ENCODE measurements at regions of chr19 and their contacts with region 1.

Region 1: DNA sequence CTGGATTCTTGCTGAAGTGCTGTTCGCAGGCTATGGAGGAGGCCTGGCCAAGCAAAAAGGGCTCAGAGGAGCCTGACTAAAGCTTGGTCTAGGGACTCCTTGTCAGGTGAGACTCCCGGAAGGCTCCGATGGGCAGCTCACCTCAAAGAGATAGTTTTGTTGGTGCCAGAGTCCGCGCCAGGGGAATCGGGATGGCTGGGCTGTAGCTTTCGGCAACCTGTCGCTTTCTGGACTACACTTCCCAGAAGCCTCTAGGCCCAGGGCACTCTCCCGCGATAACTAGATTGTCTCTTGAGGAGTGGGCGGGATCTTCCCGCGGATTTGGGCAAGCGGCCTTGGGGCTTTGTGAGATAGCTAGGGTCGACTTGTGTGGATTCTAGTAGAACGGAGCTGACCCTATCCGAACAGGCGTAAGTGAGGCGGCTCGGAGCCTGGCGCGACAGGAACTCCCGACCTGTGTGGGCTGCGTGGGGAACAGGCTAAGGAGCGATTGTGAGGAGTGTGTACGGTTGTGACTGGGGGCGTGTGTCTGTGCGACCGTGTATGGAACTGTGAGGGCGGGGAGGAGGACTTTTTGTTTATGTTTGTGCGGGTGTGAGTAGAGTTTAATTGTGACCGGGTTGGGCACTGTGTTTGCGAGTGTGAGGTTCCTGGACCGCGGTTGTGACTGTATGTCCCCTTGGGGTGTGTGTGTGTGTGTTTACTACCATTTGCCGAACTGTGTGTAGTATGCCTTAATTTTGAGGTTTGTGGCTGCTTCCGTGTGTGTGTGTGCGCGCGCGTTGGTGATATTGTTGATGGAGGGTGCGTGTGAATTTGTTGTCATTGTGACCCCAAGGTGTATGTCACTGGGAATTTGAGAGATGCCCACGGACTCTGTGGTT is at the start of gene ZNF345:
- DNase-seq: peak; percentile 84
- H3K4me3 Mint-ChIP-seq: no peak within 1 kb of the TSS
- H3K27ac Mint-ChIP-seq: no peak within 1 kb of the TSS
- H3K4me1 Mint-ChIP-seq: peaks cover 4% of the 10 kb centered on the region
- H3K27me3 Mint-ChIP-seq: no peaks in the 10 kb centered on the region
- total RNA-seq, gene ZNF345: 2.3 and 3.9 TPM in 2 replicates

Region 2: DNA sequence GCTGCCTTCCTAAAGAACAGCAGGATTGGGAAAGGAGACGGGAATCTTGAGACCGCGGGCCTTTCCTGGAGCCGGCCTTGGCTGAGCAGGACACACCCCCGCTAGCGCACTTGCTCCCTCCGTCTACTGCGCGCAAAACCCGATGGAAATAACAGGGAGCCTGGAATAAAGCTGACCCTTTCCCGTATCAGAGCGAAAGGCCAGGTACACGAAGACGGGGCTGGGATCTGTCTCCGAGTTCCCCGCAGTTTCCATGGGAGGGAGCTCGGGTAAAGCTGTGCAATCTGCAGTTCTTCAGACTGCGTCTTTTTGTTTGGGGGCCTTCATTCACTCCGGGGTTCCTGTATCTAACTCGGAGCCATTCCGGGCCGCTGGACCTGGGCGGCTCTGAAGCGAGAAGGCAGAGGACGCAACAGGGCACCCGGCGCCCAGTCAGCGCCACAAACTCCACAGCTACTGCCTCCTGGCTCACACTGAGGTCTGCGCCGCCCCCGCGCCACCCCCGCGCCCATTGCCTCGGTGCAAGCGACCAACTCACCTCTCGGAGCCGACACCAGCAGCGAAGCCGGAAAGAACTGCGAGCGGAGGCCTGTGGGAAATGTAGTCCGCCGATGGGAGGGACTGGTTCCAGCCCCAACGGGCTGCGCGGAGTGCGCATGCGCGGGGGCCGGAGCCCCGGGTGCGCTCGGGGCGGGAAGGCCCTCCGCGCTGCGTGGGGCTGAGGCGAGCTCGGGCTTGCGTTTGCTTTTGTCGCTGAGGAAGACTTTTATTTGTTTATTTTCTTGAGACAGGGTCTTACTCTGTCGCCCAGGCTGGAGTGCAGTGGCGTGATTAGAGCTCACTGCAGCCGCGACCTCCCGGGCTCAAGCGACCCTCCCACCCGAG is 471.9 kb before region 1 on chr19 and contains the start of gene ZFP14:
- intact Hi-C with region 1: loop called (anchors 1 kb)
- DNase-seq: peak; percentile 91
- H3K4me3 Mint-ChIP-seq: peak within 1 kb of the TSS; percentile 85
- H3K27ac Mint-ChIP-seq: peak within 1 kb of the TSS; percentile 86
- H3K4me1 Mint-ChIP-seq: peaks cover 12% of the 10 kb centered on the region
- H3K27me3 Mint-ChIP-seq: no peaks in the 10 kb centered on the region
- total RNA-seq, gene ZFP14: 2.0 and 2.4 TPM in 2 replicates

Region 3: DNA sequence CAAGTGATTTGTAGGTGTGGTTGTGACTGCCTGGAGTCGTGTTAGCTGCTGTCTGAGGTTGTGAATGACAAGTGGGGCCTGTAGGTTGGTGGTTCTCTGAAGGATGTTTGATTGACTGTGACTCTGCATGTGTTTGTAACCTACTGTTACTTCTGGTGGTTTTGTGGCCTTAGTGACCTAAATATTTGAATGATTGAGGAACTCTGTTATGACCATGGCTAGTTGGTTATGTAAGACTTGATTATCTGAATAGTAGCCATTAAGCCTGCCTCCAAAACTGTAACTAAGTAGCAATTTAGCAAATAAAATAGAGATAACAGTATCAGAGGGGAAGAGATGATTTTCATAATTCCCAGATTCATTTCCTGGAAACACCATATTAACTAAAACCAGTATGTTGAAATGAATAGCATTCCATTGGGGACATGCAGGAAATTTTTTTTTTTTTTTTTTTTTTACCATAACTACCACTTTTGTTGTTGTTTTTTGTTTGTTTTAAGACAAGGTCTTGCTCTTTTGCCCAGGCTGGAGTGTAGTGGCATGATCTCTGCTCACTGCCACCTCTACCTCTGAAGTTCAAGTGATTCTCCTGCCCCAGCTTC is 244.8 kb before region 1 on chr19:
- intact Hi-C with region 1: no loop called
- DNase-seq: no peak
- H3K4me3 Mint-ChIP-seq: peak overlapping the region; percentile 87
- H3K27ac Mint-ChIP-seq: peak overlapping the region; percentile 88
- H3K4me1 Mint-ChIP-seq: peaks cover 17% of the 10 kb centered on the region
- H3K27me3 Mint-ChIP-seq: no peaks in the 10 kb centered on the region

Region 4: GRCh38 chr19:36687214-36688056 is 163.4 kb before region 1 on chr19 and contains the start of gene ZNF567:
- intact Hi-C with region 1: loop called (anchors 1 kb)
- DNase-seq: peak; percentile 96
- H3K4me3 Mint-ChIP-seq: peak within 1 kb of the TSS; percentile 95
- H3K27ac Mint-ChIP-seq: peak within 1 kb of the TSS; percentile 83
- H3K4me1 Mint-ChIP-seq: peaks cover 17% of the 10 kb centered on the region
- H3K27me3 Mint-ChIP-seq: no peaks in the 10 kb centered on the region
- total RNA-seq, gene ZNF567: 7.6 and 7.7 TPM in 2 replicates

Region 5: DNA sequence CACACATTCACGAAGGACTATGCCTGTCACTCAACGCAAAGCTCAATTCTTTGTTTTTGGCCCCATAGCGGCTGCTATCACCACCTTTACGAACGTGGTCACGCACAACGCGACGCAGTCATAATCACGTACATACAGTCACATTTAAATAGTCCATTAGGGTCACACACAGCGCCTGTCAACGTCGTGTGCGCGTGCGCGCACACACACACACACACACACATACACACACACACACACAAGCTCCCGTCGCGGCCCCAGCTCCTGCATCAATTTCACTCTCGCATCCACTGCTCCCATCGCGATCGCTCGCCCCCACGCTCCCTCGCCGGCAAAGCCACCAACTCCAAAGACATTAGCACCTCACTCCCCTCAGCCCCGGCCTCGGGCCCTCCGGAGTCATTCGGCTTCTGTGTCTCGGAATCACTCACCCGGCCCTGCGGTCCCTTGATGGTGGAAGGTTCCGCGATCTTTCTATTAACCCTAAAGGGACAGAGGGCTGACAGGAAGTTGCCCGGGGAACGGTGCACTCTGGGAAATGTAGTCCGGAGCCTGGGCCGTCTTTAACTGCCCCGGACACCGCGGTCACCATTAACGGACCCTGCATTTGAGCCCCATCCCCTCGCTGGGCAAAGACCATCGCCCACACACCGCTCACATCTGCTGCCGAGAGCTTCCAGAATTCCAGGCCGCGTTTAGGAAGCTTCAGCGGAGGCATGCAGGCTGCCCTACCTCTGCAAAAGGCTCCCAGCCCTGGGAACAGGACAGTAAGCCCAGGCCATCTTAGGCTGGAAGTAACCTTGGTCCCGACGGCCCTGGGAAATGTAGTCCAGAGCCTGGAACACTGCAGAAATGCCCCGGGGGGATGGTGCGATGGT is 12.7 kb before region 1 on chr19 and contains the start of gene ZNF790:
- intact Hi-C with region 1: loop called (anchors 1 kb)
- DNase-seq: peak; percentile 77
- H3K4me3 Mint-ChIP-seq: no peak within 1 kb of the TSS
- H3K27ac Mint-ChIP-seq: no peak within 1 kb of the TSS
- H3K4me1 Mint-ChIP-seq: peaks cover 2% of the 10 kb centered on the region
- H3K27me3 Mint-ChIP-seq: no peaks in the 10 kb centered on the region
- total RNA-seq, gene ZNF790: 4.6 TPM in 2 replicates

Region 6: DNA sequence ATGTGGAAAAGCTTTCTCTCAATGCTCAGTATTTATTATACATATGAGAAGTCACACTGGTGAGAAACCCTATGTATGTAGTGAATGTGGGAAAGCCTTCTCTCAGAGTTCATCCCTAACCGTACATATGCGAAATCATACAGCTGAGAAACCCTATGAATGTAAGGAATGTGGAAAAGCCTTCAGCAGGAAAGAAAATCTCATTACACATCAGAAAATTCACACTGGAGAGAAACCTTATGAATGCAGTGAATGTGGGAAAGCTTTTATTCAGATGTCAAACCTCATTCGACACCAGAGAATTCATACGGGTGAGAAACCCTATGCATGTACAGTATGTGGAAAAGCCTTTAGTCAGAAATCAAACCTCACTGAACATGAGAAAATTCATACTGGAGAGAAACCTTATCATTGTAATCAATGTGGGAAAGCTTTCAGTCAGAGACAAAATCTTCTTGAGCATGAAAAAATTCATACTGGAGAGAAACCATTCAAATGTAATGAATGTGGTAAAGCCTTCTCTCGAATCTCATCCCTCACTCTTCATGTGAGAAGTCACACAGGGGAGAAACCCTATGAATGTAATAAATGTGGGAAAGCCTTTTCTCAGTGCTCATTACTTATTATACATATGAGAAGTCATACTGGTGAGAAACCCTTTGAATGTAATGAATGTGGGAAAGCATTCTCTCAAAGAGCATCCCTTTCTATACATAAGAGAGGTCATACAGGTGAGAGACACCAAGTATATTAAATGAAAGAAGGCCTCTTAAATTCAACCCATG is 99.7 kb after region 1 on chr19:
- intact Hi-C with region 1: no loop called
- DNase-seq: no peak
- H3K4me3 Mint-ChIP-seq: no peak overlapping the region
- H3K27ac Mint-ChIP-seq: no peak overlapping the region
- H3K4me1 Mint-ChIP-seq: no peaks in the 10 kb centered on the region
- H3K27me3 Mint-ChIP-seq: no peaks in the 10 kb centered on the region

Region 7: GRCh38 chr19:37077934-37078725 is 227.3 kb after region 1 on chr19 and contains the start of gene ZNF420:
- intact Hi-C with region 1: loop called (anchors 1 kb)
- DNase-seq: peak; percentile 85
- H3K4me3 Mint-ChIP-seq: peak within 1 kb of the TSS; percentile 97
- H3K27ac Mint-ChIP-seq: peak within 1 kb of the TSS; percentile 82
- H3K4me1 Mint-ChIP-seq: peaks cover 13% of the 10 kb centered on the region
- H3K27me3 Mint-ChIP-seq: no peaks in the 10 kb centered on the region
- total RNA-seq, gene ZNF420: 4.7 and 5.5 TPM in 2 replicates

Region 8: GRCh38 chr19:37197768-37198167 is 347.0 kb after region 1 on chr19:
- intact Hi-C with region 1: no loop called
- DNase-seq: no peak
- H3K4me3 Mint-ChIP-seq: no peak overlapping the region
- H3K27ac Mint-ChIP-seq: no peak overlapping the region
- H3K4me1 Mint-ChIP-seq: no peaks in the 10 kb centered on the region
- H3K27me3 Mint-ChIP-seq: no peaks in the 10 kb centered on the region

Region 9: GRCh38 chr19:37466798-37467607 is 616.2 kb after region 1 on chr19 and contains the start of gene ZNF569:
- intact Hi-C with region 1: loop called (anchors 5 kb)
- DNase-seq: peak; percentile 87
- H3K4me3 Mint-ChIP-seq: peak within 1 kb of the TSS; percentile 86
- H3K27ac Mint-ChIP-seq: peak within 1 kb of the TSS; percentile 89
- H3K4me1 Mint-ChIP-seq: peaks cover 19% of the 10 kb centered on the region
- H3K27me3 Mint-ChIP-seq: no peaks in the 10 kb centered on the region
- total RNA-seq, gene ZNF569: 3.5 and 3.8 TPM in 2 replicates